Endothelial cell of umbilical vein (primary cell): ENCODE measurements at regions of chr20 and their contacts with region 1.

Region 1: GRCh38 chr20:54062812-54063280 is 7.5 kb downstream of the BCAS1 start:
- DNase-seq: peak; percentile 35
- H3K4me3 ChIP-seq: no peak overlapping the region
- H3K27ac ChIP-seq: no peak overlapping the region
- H3K4me1 ChIP-seq: no peaks in the 10 kb centered on the region
- H3K27me3 ChIP-seq: no peaks in the 10 kb centered on the region
- CTCF ChIP-seq: peak; percentile 40 to 44
- POLR2A ChIP-seq: no peak

Region 2: GRCh38 chr20:53157443-53158408 is 905.1 kb before region 1 on chr20:
- CTCF ChIA-PET with region 1: no interaction called
- POLR2A ChIA-PET with region 1: no interaction called
- dilution Hi-C with region 1: no loop called
- intact Hi-C with region 1: loop called (anchors 1 kb)
- DNase-seq: peak; percentile 27
- H3K4me3 ChIP-seq: no peak overlapping the region
- H3K27ac ChIP-seq: no peak overlapping the region
- H3K4me1 ChIP-seq: no peaks in the 10 kb centered on the region
- H3K27me3 ChIP-seq: no peaks in the 10 kb centered on the region
- CTCF ChIP-seq: peak; percentile 47 to 64
- POLR2A ChIP-seq: no peak

Region 3: DNA sequence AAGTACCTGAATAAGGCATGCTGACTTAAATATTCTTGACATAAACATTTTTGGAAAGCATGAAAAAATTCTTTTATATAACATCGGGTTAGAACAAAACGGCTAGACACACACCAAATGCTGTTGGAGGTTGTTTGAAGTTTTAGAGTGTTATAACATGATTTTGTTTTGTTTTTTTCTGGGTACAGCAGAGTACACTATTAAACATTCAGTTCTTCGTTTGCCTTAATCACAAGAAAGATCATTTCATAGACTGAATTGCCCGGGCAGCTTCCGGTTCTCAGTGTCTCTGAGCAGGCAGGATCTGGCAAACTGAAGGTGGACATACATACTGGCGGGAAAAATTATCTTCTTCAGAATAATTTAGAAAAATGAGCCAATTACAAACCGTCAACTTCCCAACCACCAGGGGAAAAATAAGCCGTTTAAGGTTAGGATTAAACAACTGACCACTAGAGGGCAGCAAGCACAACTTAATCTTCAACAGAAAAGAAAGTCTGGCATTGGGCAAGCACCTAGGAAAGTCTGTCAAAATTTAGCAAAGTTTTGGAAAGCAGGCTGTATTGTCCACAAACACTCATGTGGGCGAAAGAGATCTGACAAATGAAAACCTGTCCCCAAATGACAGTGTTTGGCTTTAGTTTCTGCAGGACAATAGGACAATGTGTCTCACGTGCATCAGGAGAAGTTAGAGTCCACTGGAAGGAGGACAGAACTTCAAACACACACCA is 484.2 kb before region 1 on chr20:
- CTCF ChIA-PET with region 1: interaction called, 3 read pairs
- POLR2A ChIA-PET with region 1: no interaction called
- dilution Hi-C with region 1: no loop called
- intact Hi-C with region 1: loop called (anchors 2 kb)
- DNase-seq: peak; percentile 90
- H3K4me3 ChIP-seq: peak overlapping the region in 1 of 3 experiments; percentile 23
- H3K27ac ChIP-seq: peak overlapping the region; percentile 43
- H3K4me1 ChIP-seq: peaks cover 20% of the 10 kb centered on the region
- H3K27me3 ChIP-seq: no peaks in the 10 kb centered on the region
- CTCF ChIP-seq: peak; percentile 60 to 75
- POLR2A ChIP-seq: peak; percentile 13